Heart right ventricle (tissue), 16 donors: ENCODE measurements at regions of chr11 and their contacts with region 1.

Region 1: DNA sequence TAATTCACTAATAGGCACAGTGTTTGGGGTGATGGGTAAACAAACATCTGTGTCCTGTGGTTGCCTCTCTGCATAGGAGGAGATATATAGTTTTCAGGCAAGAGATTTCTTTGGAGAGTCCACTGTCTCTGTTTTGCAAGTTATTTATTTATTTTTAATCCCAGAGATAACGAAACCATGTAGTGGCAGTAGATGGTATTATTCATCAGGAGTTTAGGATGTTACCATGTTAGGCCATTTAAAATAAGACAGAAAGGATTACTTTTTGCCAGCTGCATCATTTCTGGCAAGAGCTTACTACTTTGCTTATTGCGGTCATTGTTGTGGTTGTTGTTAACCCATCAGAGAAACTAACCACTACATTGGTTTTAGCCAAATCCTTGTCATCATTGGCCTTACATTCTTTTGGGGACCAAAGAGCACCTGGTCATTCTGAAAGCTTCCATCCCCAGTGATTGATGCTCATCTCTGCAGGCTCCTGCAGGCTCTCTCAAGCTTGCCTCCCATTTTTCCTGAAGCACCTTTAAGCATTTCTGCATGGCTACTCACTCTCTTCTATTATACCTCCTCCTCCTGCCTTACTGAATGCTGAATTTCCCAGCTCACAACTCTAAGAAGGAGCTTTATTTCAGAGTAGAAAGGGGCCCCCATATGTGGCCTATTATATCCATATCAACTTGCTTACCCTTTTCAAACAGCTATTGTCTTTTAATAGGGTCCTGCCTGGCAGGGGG is 84.4 kb downstream of the CSTPP1 start:
- DNase-seq: no peak
- ATAC-seq: no peak
- H3K4me3 ChIP-seq: no peak overlapping the region
- H3K27ac ChIP-seq: no peak overlapping the region
- H3K4me1 ChIP-seq: no peaks in the 10 kb centered on the region
- H3K27me3 ChIP-seq: no peaks in the 10 kb centered on the region
- CTCF ChIP-seq: no peak

Region 2: DNA sequence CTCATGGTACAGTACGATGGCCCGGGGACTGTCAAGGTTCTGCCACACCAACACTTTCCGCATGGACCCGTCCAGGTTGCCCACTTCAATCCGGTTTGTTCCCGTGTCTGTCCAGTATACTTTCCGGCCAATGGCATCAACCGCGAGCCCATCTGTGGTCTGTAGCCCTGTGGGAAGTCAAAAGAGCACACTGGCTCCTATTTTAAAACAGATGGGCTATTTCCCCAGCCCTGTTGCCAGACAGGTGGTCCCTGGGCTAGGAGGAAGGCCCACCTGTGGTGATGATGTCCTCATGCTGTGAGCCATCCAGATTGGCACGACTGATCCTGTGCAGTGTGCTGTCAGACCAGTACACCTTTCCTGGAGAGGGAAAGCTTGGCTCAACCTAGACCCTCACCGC is 144.5 kb before region 1 on chr11:
- intact Hi-C with region 1: no loop called
- DNase-seq: no peak
- ATAC-seq: no peak
- H3K4me3 ChIP-seq: no peak overlapping the region
- H3K27ac ChIP-seq: no peak overlapping the region
- H3K4me1 ChIP-seq: no peaks in the 10 kb centered on the region
- H3K27me3 ChIP-seq: no peaks in the 10 kb centered on the region
- CTCF ChIP-seq: no peak

Region 3: DNA sequence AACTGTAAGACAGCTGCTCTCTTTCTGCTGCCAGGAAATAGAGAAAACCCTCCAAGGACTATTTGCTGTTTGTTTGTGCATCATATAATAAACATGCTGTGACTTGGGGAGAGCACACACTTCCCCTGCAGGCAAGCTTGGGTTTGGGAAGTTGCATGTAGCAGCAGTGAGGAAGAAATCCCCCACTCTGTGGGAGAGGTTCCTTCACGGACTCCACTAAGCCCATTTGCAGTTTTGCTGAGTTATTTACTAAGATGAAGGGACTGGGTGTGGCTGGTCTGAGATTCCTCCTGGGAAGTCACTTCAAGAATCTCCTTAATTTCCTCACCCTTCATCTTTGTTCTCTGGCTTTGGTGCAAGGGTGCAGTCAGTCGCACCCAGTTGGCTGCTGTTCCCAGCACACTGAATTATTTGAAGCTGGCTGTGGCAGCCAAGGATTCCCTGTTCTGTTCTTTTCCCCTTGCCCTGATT is 50.9 kb after region 1 on chr11:
- intact Hi-C with region 1: loop called in 1 of 10 experiments (anchors 10 kb)
- DNase-seq: no peak
- ATAC-seq: peak in 6 of 8 donors; percentile 22 to 92 (median 44)
- H3K4me3 ChIP-seq: no peak overlapping the region
- H3K27ac ChIP-seq: peak overlapping the region in 3 of 10 donors; percentile 8 to 17 (median 11)
- H3K4me1 ChIP-seq: peaks cover 0 to 16% (median 5%) of the 10 kb centered on the region in 9 donors
- H3K27me3 ChIP-seq: no peaks in the 10 kb centered on the region
- CTCF ChIP-seq: no peak